CD8-positive, alpha-beta T cell (primary cell): ENCODE measurements at regions of chr17 and their contacts with region 1.

Region 1: DNA sequence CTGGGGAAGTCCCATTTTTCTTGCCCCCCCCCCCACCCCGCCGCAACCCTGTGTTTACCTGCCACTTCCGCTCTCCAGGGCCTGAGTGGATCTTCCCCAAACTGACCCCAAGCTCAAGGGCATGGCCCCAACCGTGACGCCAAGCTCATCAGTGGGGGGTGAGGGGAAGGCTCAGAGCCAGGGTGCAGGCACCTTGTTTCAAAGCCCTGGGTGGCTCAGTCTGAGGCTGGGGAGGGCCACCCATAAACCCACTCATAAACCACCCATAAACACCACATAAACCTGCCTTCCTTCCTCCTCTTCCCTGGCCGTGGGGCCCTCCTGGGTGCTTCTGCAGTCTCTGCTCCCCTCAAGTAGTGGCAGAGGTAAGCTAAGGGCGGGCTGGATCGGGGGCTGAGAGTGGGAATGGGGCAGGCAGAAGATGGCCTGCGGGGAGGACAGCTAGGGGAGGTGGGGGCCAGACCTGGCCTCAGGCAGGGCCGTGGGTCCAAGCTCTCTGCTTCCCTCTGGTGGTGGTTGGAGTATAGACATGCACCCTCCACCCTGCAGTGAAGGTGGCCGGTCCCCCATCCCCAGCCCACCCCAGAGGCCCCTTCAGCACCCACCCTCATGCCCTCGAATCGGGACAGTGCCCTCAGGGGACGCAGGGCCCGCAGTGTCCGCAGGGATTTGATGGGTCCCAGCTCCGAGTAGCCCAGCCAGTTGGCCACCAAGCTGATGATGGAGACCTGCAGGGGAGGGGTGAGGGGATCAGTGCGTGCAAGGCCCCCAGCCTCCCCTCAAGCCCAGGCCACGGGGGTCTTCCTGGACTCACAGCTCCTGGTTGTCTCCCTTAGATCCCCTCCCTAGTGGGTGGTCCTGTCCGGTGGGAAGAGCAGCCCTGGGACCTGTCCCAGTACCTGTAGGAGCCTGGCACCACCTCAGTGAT is 14.6 kb upstream of the CD79B start:
- DNase-seq: peak; percentile 22 to 77 (median 60)
- ATAC-seq: peak; percentile 78
- H3K4me3 ChIP-seq: peak overlapping the region; percentile 29 to 47
- H3K4me3 Mint-ChIP-seq: peak overlapping the region; percentile 74
- H3K27ac ChIP-seq: peak overlapping the region in 1 of 2 experiments; percentile 43
- H3K27ac Mint-ChIP-seq: peak overlapping the region; percentile 72
- H3K4me1 ChIP-seq: peaks cover 20% of the 10 kb centered on the region
- H3K4me1 Mint-ChIP-seq: peaks cover 20% of the 10 kb centered on the region
- H3K27me3 ChIP-seq: no peaks in the 10 kb centered on the region
- H3K27me3 Mint-ChIP-seq: no peaks in the 10 kb centered on the region
- CTCF ChIP-seq: peak; percentile 69

Region 2: GRCh38 chr17:63904316-63904715 is 42.4 kb before region 1 on chr17:
- CTCF ChIA-PET with region 1: interaction called, 19 read pairs
- POLR2A ChIA-PET with region 1: no interaction called
- intact Hi-C with region 1: no loop called
- DNase-seq: no peak
- ATAC-seq: no peak
- H3K4me3 ChIP-seq: no peak overlapping the region
- H3K4me3 Mint-ChIP-seq: no peak overlapping the region
- H3K27ac ChIP-seq: no peak overlapping the region
- H3K27ac Mint-ChIP-seq: no peak overlapping the region
- H3K4me1 ChIP-seq: no peaks in the 10 kb centered on the region
- H3K4me1 Mint-ChIP-seq: peaks cover 4% of the 10 kb centered on the region
- H3K27me3 ChIP-seq: no peaks in the 10 kb centered on the region
- H3K27me3 Mint-ChIP-seq: no peaks in the 10 kb centered on the region
- CTCF ChIP-seq: no peak

Region 3: GRCh38 chr17:63911657-63912426 is 34.9 kb before region 1 on chr17:
- CTCF ChIA-PET with region 1: interaction called, 87 read pairs
- POLR2A ChIA-PET with region 1: no interaction called
- intact Hi-C with region 1: no loop called
- DNase-seq: peak; percentile 35 to 78 (median 72)
- ATAC-seq: peak; percentile 94
- H3K4me3 ChIP-seq: no peak overlapping the region
- H3K4me3 Mint-ChIP-seq: no peak overlapping the region
- H3K27ac ChIP-seq: no peak overlapping the region
- H3K27ac Mint-ChIP-seq: no peak overlapping the region
- H3K4me1 ChIP-seq: no peaks in the 10 kb centered on the region
- H3K4me1 Mint-ChIP-seq: peaks cover 2% of the 10 kb centered on the region
- H3K27me3 ChIP-seq: no peaks in the 10 kb centered on the region
- H3K27me3 Mint-ChIP-seq: peaks cover 4% of the 10 kb centered on the region
- CTCF ChIP-seq: peak; percentile 77

Region 4: DNA sequence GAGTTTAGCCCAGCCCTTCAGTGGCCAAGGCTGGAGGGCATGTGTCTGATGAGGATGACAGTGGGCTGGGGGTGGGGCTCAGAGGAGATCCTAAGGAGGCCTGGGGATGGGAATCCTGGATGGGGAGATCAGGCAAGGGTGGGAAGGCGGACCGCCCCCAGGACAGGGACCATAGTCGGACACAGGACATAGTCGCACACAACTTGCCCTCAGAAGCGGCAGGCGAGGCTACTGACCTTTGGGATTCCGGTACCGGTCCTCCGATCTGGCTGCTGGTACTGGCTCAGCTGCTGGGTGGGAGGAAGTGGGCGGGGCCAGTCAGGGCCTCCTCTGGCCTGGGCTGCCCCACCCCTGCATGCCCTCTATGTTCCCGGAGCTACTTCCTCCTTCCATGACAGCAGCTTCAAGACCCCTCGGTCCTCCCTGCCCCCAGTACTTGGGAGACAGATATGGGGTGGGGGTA is 15.6 kb before region 1 on chr17:
- CTCF ChIA-PET with region 1: interaction called, 22 read pairs
- POLR2A ChIA-PET with region 1: interaction called, 6 read pairs
- intact Hi-C with region 1: loop called in 1 of 2 experiments (anchors 1 kb)
- DNase-seq: peak in 8 of 9 experiments; percentile 53 to 79 (median 66)
- ATAC-seq: peak; percentile 81
- H3K4me3 ChIP-seq: peak overlapping the region; percentile 48 to 58
- H3K4me3 Mint-ChIP-seq: peak overlapping the region; percentile 93
- H3K27ac ChIP-seq: peak overlapping the region; percentile 36 to 50
- H3K27ac Mint-ChIP-seq: peak overlapping the region; percentile 94
- H3K4me1 ChIP-seq: peaks cover 20% of the 10 kb centered on the region
- H3K4me1 Mint-ChIP-seq: peaks cover 27% of the 10 kb centered on the region
- H3K27me3 ChIP-seq: no peaks in the 10 kb centered on the region
- H3K27me3 Mint-ChIP-seq: no peaks in the 10 kb centered on the region
- CTCF ChIP-seq: no peak

Region 5: DNA sequence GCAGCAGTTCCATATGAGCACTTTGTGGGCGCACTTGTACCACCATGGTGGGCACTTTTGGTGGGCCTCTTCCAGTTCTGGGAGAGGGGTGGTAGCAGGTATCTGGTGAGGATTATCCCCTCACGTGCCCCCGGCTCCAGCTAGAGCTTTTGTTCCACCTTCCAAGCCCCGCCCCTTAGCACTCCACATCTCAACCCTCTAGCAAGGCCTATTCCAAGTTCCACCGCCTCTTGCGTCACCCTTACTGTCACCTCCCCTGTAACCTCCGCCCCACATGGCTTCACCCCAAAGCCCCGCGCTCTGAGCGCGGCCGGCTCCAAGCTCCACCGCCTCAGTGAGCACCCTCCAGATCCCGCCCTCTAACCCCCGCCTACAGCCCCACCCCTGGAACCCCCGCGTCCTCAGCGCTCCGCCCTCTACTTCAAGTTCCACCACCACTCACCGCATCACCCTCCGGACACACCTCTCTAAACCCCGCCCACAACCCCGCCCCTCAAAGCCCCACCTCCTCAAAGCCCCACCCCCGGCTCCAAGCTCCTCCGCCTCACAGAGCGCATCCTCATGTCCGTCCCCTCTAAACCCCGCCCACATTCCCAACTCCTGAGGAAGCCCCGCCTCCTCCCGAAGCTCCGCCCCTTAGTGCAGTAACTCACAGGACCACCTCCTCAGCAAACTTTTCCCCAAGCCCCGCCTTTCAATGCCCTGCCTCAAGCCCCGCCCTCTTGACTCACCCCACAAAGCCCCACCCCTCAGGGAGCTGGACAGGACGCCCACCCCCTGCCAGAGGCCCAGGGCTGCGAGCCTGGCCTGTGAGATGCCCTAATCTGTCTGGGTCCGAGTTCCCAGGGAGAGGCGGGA is 14.9 kb after region 1 on chr17:
- CTCF ChIA-PET with region 1: interaction called, 16 read pairs
- POLR2A ChIA-PET with region 1: interaction called, 6 read pairs
- intact Hi-C with region 1: no loop called
- DNase-seq: peak in 5 of 9 experiments; percentile 20 to 59 (median 42)
- ATAC-seq: peak; percentile 81
- H3K4me3 ChIP-seq: no peak overlapping the region
- H3K4me3 Mint-ChIP-seq: peak overlapping the region; percentile 42
- H3K27ac ChIP-seq: no peak overlapping the region
- H3K27ac Mint-ChIP-seq: no peak overlapping the region
- H3K4me1 ChIP-seq: peaks cover 9% of the 10 kb centered on the region
- H3K4me1 Mint-ChIP-seq: peaks cover 10% of the 10 kb centered on the region
- H3K27me3 ChIP-seq: no peaks in the 10 kb centered on the region
- H3K27me3 Mint-ChIP-seq: no peaks in the 10 kb centered on the region
- CTCF ChIP-seq: no peak

Region 6: GRCh38 chr17:63984651-63985386 is 38.1 kb after region 1 on chr17:
- CTCF ChIA-PET with region 1: interaction called, 16 read pairs
- POLR2A ChIA-PET with region 1: no interaction called
- intact Hi-C with region 1: loop called (anchors 5 kb)
- DNase-seq: peak in 7 of 9 experiments; percentile 29 to 85 (median 65)
- ATAC-seq: peak; percentile 94
- H3K4me3 ChIP-seq: no peak overlapping the region
- H3K4me3 Mint-ChIP-seq: no peak overlapping the region
- H3K27ac ChIP-seq: peak overlapping the region in 1 of 2 experiments; percentile 52
- H3K27ac Mint-ChIP-seq: peak overlapping the region; percentile 33
- H3K4me1 ChIP-seq: peaks cover 7% of the 10 kb centered on the region
- H3K4me1 Mint-ChIP-seq: peaks cover 21% of the 10 kb centered on the region
- H3K27me3 ChIP-seq: no peaks in the 10 kb centered on the region
- H3K27me3 Mint-ChIP-seq: no peaks in the 10 kb centered on the region
- CTCF ChIP-seq: no peak

Region 7: DNA sequence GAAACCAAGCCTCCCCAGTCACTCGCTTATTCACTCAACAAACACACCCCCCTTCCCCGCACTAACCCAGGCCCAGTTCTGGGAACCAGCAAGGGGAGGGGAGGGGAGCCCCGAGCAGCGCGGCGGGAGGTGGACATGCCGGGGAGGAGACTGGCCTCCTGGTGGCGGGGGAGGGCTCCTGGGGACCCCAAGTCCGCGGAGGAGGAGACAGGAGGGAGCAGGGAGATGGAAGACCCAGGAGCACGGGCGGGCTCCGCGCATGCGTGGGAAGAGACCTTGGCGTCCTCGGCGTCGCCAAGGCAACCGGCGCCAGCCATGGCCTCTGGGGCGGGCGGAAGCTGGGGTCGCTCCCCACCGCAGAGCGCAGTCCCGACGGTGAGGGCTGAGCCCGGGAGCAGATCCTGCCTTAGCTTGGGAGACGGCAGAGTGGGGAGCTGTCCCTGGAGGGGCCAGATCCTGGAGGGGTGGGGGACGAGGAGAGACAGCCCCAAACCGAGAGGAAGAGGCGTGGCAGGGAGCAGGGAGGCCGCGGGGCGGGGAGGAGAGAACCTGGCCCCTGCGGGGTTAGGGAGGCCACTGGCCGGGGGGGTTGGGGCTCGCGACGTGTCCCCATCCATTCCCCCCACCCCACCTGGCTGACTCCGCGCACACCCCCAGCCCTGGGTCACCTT is 51.5 kb after region 1 on chr17 and contains the start of gene PRR29:
- CTCF ChIA-PET with region 1: interaction called, 14 read pairs
- POLR2A ChIA-PET with region 1: interaction called, 3 read pairs
- intact Hi-C with region 1: no loop called
- DNase-seq: peak; percentile 56 to 90 (median 75)
- ATAC-seq: peak; percentile 69
- H3K4me3 ChIP-seq: peak within 1 kb of the TSS; percentile 64 to 78
- H3K4me3 Mint-ChIP-seq: peak within 1 kb of the TSS; percentile 89
- H3K27ac ChIP-seq: no peak within 1 kb of the TSS
- H3K27ac Mint-ChIP-seq: peak within 1 kb of the TSS; percentile 75
- H3K4me1 ChIP-seq: peaks cover 29% of the 10 kb centered on the region
- H3K4me1 Mint-ChIP-seq: peaks cover 40% of the 10 kb centered on the region
- H3K27me3 ChIP-seq: no peaks in the 10 kb centered on the region
- H3K27me3 Mint-ChIP-seq: no peaks in the 10 kb centered on the region
- CTCF ChIP-seq: no peak
- total RNA-seq, gene PRR29: 0.24 to 0.97 TPM